Activated CD4-positive, alpha-beta memory T cell treated with anti-CD3 and anti-CD28 coated beads, Interleukin-2, amount 10 ng/mL, durations not matched to agents 7 days and 5 days (primary cell): ENCODE measurements at regions of chr13 and their contacts with region 1.

Region 1: GRCh38 chr13:52652196-52652979 is at the start of gene SUGT1:
- DNase-seq: peak; percentile 97
- H3K4me3 Mint-ChIP-seq: no peak within 1 kb of the TSS
- H3K27ac Mint-ChIP-seq: no peak within 1 kb of the TSS
- H3K4me1 Mint-ChIP-seq: peaks cover 9% of the 10 kb centered on the region
- H3K27me3 Mint-ChIP-seq: no peaks in the 10 kb centered on the region
- total RNA-seq, gene SUGT1: 50.1 to 51.7 TPM

Region 2: DNA sequence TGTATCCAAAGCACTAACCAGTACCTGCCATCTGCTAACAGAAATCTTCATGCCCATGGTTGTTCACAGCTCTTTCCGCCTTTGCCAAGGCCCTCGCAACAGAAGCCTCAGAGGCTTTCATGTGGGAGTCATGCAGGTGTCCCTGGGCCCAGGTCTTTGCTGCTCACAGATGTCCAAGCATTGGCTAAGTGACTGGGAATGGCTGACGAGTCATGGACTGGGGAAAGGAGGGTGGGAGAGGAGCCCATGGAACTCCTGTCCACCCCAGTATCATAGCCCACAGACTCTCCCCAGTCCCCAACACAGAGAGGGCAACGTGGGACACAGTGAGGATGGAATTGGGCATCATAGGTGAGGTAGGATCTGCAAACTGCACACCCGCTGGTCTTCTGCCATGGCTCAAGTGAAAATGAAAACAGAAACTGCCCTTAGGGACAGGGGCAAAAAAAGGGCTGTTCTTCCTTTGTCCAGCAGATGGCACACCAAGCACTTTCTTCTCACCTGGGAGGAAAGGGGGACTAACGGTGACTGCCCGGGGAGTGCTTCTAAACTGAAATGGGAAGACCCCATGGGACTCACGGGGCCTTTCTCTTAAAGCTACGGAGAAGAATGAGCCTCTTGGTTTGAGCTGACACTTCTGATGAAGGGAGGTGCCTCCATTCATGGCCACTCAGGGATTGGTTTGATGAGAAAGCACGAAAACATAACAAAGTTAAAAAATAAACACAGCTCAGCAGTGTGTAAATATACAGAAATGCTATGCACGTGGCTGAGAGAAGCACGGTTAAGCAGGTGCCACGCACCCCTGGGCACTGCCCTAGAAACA is 837.4 kb before region 1 on chr13:
- CTCF ChIA-PET with region 1: no interaction called
- POLR2A ChIA-PET with region 1: no interaction called
- DNase-seq: peak; percentile 82
- H3K4me3 Mint-ChIP-seq: peak overlapping the region; percentile 45
- H3K27ac Mint-ChIP-seq: peak overlapping the region; percentile 54
- H3K4me1 Mint-ChIP-seq: peaks cover 45% of the 10 kb centered on the region
- H3K27me3 Mint-ChIP-seq: no peaks in the 10 kb centered on the region

Region 3: DNA sequence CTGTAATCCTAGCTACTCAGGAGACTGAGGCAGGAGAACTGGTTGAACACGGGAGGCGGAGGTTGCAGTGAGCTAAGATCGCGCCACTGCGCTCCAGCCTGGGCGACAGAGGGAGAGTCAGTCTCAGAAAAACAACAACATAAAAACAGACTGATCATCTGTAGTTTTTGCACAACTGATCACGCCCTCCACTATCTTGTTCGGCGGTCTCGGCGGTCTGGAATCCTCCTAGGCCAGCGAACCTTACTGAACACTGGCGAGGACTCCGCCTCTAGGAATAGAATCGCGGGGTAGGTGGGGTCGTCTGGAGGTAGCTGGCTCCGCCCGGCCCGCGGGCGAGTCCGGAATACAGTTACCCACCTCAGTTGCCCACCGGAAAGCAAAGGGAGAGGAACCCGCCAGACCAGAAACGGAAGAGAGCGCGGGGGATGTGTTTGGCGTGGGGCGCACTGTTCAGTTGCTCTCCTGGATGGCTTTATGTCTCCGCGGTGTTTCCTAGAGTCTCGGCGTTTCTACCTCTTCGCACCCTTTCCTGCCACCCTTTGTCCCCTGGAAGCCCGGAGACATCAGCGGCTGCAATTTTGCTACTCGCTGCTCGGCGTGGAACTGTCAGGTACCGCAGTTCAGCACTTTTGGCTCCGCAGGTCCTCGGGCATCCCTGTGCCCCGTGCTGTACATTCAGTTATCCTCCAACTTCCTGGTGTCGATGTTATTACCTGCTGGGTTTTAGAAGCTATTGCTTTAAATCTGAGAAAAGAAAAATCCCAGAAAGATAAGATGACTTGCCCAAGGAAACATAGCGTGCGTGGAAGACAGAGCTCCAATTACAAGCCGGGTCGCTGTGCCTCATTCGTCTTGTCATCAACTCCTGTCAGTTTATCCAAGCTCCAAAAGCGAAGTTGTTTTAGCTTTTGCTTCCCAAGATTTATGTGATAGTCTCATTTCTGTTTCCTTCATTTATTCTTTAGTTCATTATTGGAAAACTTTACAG is 35.0 kb before region 1 on chr13:
- CTCF ChIA-PET with region 1: interaction called, 40 read pairs
- POLR2A ChIA-PET with region 1: interaction called, 91 read pairs
- DNase-seq: peak; percentile 86
- H3K4me3 Mint-ChIP-seq: peak overlapping the region; percentile 95
- H3K27ac Mint-ChIP-seq: peak overlapping the region; percentile 85
- H3K4me1 Mint-ChIP-seq: peaks cover 28% of the 10 kb centered on the region
- H3K27me3 Mint-ChIP-seq: peaks cover 2% of the 10 kb centered on the region

Region 4: DNA sequence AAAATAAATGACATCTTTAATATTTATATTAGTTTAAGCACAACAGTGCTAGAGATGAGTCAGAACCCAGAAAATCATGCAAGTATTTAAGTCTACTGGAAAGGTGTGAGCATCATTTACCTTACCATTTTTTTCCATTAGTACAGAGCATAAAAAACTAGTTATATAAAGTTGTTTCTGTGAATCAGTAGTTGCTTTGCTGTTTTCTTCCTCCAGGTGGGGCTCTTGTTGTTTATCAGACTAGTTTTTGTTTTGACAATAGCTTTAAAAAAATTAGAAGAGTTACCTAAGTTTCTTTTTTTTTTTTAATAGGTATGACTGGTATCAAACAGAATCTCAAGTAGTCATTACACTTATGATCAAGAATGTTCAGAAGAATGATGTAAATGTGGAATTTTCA is 12.9 kb after region 1 on chr13:
- CTCF ChIA-PET with region 1: interaction called, 40 read pairs
- POLR2A ChIA-PET with region 1: interaction called, 43 read pairs
- DNase-seq: no peak
- H3K4me3 Mint-ChIP-seq: no peak overlapping the region
- H3K27ac Mint-ChIP-seq: no peak overlapping the region
- H3K4me1 Mint-ChIP-seq: peaks cover 1% of the 10 kb centered on the region
- H3K27me3 Mint-ChIP-seq: no peaks in the 10 kb centered on the region